Heart left ventricle (tissue), 16 donors: ENCODE measurements at regions of chr17 and their contacts with region 1.

Region 1: GRCh38 chr17:35612924-35613521 is 25.9 kb downstream of the AP2B1 start:
- DNase-seq: peak in 2 of 5 donors; percentile 17 to 38
- ATAC-seq: peak in 1 of 4 donors; percentile 38
- H3K4me3 ChIP-seq: no peak overlapping the region
- H3K27ac ChIP-seq: no peak overlapping the region
- H3K4me1 ChIP-seq: peaks cover 0 to 23% (median 7%) of the 10 kb centered on the region in 12 donors
- H3K27me3 ChIP-seq: no peaks in the 10 kb centered on the region
- CTCF ChIP-seq: peak; percentile 19 to 69 (median 58)
- POLR2A ChIP-seq: no peak

Region 2: DNA sequence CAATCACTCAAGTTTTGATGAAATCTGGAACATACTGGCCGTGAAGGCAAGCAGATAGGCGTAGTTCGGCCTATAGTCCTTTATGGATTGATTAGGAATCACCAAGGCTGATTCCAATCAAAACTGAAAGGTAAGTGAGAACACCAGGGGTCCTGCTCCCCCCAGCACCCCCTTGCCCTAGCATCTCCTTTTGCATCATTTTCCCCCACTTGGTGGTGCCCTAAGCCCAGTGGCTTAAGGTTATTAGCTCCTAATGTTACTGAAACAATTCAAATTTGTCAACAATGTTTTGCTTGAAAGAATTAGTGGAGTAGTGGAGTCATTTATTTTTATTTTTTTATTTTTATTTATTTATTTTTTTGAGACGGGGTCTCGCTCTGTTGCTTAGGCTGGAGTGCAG is 57.3 kb before region 1 on chr17:
- intact Hi-C with region 1: no loop called
- DNase-seq: no peak
- ATAC-seq: no peak
- H3K4me3 ChIP-seq: no peak overlapping the region
- H3K27ac ChIP-seq: no peak overlapping the region
- H3K4me1 ChIP-seq: peaks cover 0 to 6% (median 0%) of the 10 kb centered on the region in 12 donors
- H3K27me3 ChIP-seq: peaks cover 0 to 15% (median 0%) of the 10 kb centered on the region in 9 donors
- CTCF ChIP-seq: no peak
- POLR2A ChIP-seq: no peak

Region 3: DNA sequence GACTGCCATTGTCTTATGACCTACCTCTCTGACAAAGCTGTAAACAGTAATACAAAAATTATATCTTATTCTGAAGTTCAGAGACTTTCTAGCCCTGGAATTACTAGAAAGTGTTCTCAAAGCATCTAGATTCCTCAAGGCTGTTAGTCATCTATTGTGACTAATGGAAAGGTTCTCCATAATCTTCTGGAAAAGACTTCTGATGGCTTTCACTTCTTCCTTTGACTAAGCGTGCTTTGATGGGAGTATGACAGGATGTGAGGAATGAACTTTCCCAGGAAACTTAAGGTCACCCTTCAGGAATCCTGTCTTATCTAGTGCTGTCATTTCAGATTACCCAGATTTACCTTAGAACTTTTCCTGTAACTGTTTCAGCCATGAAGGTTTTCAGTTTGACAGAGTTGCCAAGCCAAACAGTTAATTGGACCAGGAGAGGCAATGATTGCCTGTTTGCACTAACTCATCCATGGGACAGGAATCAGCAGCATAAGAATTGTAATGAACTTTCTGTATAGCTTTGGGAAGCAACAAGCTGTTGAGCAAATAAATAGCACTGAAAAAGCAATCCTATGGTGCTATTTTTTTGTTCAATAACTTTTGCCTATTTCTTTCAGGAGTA is 17.6 kb after region 1 on chr17:
- intact Hi-C with region 1: loop called in 1 of 10 experiments (anchors 2 kb)
- DNase-seq: no peak
- ATAC-seq: peak in 3 of 4 donors; percentile 31 to 49 (median 37)
- H3K4me3 ChIP-seq: no peak overlapping the region
- H3K27ac ChIP-seq: no peak overlapping the region
- H3K4me1 ChIP-seq: peaks cover 0 to 5% (median 0%) of the 10 kb centered on the region in 12 donors
- H3K27me3 ChIP-seq: no peaks in the 10 kb centered on the region
- CTCF ChIP-seq: no peak
- POLR2A ChIP-seq: no peak

Region 4: DNA sequence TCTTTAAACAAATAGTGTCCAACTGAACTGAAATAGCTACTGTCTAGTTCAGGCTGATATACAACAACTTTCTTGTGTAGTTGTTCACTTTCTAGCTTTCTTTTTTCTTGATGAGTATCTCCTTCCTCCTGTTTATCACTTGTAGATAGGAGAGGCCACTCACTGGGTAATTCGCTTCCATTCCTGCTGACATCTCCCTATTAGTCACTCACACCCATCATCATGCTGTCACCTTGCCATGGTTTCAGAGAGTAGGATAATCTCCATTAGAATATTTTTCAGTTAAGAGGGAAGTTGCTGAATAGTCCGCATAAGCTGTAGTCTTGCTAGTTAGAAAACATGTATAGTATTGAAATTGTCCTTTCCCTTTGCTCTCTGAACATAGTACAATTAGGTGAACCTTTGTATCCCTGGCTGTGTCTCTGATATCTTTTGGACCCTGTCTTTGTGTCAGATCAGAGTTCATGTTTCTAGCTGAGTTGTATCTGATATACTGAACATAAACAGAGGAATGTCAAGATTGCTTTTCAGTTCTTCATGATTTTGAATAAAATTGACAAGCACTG is 54.0 kb after region 1 on chr17:
- intact Hi-C with region 1: loop called in 2 of 10 experiments (anchors 10 kb)
- DNase-seq: no peak
- ATAC-seq: no peak
- H3K4me3 ChIP-seq: no peak overlapping the region
- H3K27ac ChIP-seq: no peak overlapping the region
- H3K4me1 ChIP-seq: peaks cover 0 to 11% (median 0%) of the 10 kb centered on the region in 12 donors
- H3K27me3 ChIP-seq: no peaks in the 10 kb centered on the region
- CTCF ChIP-seq: no peak
- POLR2A ChIP-seq: no peak

Region 5: DNA sequence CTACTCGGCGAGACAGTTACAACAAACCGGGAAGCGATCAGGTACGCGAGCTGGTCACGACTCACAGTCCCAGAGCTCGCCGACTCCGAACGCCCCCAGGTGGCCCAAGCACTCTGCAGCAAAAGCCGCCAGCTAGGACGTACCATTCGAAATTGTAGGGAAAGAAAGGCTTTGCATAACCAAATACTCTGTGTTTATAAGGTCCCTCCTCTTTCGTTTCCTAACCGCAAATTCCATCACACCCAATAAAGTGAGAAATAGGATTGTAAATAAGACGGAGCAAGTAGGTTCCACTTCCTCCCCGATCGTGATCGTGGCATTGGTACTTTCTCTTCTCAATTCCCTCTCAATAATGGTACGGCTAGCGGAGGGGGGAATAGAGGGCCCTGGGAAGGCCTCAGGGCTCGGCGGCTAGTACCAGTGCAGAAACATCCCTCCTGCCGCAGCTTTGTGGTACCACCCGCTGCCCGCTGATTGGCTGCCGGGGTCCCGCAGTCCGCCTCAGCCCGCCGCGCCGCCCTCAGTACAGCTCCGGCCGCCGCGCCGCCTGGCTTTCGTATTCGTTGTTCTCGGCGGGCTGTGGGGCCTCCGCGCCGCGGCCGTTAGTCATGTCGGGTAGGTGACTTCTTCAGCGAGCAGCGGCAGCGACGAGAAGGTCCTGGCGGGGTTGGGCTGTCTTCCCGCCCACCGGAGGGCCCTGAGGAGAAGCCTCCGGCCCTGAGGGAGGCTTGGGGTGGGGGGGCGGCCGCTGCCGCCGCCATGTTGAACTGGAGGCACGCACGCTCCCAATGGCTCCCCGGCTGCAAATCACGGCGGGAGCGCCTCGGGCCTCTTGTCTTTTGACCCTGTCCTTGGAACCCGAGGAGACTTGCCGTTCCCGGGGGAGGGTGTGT is 196.2 kb after region 1 on chr17 and contains the start of gene TAF15:
- intact Hi-C with region 1: loop called in 1 of 10 experiments (anchors 10 kb)
- DNase-seq: peak; percentile 95 to 98 (median 97)
- ATAC-seq: peak; percentile 97 to 100 (median 98)
- H3K4me3 ChIP-seq: peak within 1 kb of the TSS; percentile 58 to 96 (median 84)
- H3K27ac ChIP-seq: peak within 1 kb of the TSS; percentile 76 to 99 (median 94)
- H3K4me1 ChIP-seq: peaks cover 0 to 49% (median 29%) of the 10 kb centered on the region in 12 donors
- H3K27me3 ChIP-seq: no peaks in the 10 kb centered on the region
- CTCF ChIP-seq: peak; percentile 47 to 97 (median 72)
- POLR2A ChIP-seq: peak; percentile 90 to 97
- total RNA-seq, gene TAF15: 30.1 to 151 (median 121) TPM